Endothelial cell of umbilical vein (primary cell): ENCODE measurements at regions of chr14 and their contacts with region 1.

Region 1: GRCh38 chr14:70907176-70907995 is at the start of gene PCNX1:
- DNase-seq: peak; percentile 79
- H3K4me3 ChIP-seq: peak within 1 kb of the TSS; percentile 90 to 93 (median 90)
- H3K27ac ChIP-seq: peak within 1 kb of the TSS; percentile 23
- H3K4me1 ChIP-seq: peaks cover 28% of the 10 kb centered on the region
- H3K27me3 ChIP-seq: no peaks in the 10 kb centered on the region
- CTCF ChIP-seq: peak; percentile 77 to 80
- POLR2A ChIP-seq: peak; percentile 49
- total RNA-seq, gene PCNX1: 30.6 and 40.5 TPM in 2 replicates

Region 2: GRCh38 chr14:69766984-69767368 is 1140.4 kb before region 1 on chr14 and contains the start of gene SRSF5:
- CTCF ChIA-PET with region 1: no interaction called
- POLR2A ChIA-PET with region 1: no interaction called
- dilution Hi-C with region 1: no loop called
- intact Hi-C with region 1: loop called (anchors 1 kb)
- DNase-seq: peak; percentile 97
- H3K4me3 ChIP-seq: peak within 1 kb of the TSS; percentile 24 to 98 (median 76)
- H3K27ac ChIP-seq: peak within 1 kb of the TSS; percentile 88
- H3K4me1 ChIP-seq: peaks cover 27% of the 10 kb centered on the region
- H3K27me3 ChIP-seq: no peaks in the 10 kb centered on the region
- CTCF ChIP-seq: no peak
- POLR2A ChIP-seq: peak; percentile 99
- total RNA-seq, gene SRSF5: 253 and 276 TPM in 2 replicates

Region 3: DNA sequence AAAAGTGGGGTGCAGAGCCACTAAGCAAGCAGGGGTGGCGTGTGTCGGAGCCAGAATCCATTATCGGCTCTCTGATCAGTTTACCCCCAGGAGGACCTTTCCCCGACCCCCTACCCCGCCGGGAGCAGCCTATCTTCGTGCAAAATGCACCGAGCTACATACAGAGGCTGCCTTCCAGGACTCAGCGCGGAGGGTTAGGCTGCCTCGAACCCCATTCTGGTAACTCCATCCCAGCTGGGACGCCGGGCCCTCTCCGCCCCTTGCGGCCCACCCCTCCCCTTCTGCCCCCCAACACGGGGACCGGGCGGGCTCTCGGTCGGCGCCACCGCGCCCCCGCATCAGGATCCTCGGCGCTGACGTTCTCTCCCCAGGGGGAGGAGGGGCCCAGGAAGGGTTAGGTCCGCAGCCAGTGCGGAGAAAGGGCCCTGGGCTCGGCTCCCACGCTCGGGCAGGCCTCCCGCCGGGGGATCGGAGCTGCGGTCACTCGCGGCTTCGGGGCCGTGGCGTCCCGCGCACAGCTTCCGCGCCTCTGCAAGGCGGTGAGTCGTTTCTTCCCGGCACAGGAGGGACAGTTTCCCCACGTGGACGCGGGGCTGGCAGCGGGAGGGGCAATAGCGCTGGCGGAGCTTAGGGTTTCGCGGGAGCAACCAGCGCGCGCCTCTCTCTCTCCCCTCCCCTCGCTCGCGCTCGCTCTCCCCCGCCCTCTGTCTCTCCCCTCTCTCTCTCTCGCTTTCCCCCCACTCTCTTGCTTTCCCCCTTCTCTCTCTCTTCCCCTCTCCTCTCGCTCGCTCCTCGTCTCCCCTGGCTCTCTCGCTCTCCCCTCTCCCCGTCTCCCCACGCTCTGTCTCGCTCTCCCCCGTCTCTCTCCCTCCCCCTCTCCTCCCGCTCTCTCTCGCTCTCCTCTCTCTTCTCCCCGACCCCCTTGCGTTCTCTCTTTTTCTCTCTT is 85.5 kb before region 1 on chr14:
- CTCF ChIA-PET with region 1: interaction called, 21 read pairs
- POLR2A ChIA-PET with region 1: no interaction called
- dilution Hi-C with region 1: no loop called
- intact Hi-C with region 1: loop called (anchors 1 kb)
- DNase-seq: peak; percentile 15
- H3K4me3 ChIP-seq: peak overlapping the region; percentile 25 to 57 (median 47)
- H3K27ac ChIP-seq: no peak overlapping the region
- H3K4me1 ChIP-seq: no peaks in the 10 kb centered on the region
- H3K27me3 ChIP-seq: peaks cover 37 to 45% of the 10 kb centered on the region in 2 experiments
- CTCF ChIP-seq: no peak
- POLR2A ChIP-seq: no peak

Region 4: GRCh38 chr14:70919774-70920173 is 12.4 kb after region 1 on chr14:
- CTCF ChIA-PET with region 1: interaction called, 71 read pairs
- POLR2A ChIA-PET with region 1: no interaction called
- dilution Hi-C with region 1: no loop called
- intact Hi-C with region 1: loop called (anchors 1 kb)
- DNase-seq: peak; percentile 89
- H3K4me3 ChIP-seq: peak overlapping the region in 1 of 3 experiments; percentile 45
- H3K27ac ChIP-seq: peak overlapping the region; percentile 8
- H3K4me1 ChIP-seq: peaks cover 24% of the 10 kb centered on the region
- H3K27me3 ChIP-seq: no peaks in the 10 kb centered on the region
- CTCF ChIP-seq: no peak
- POLR2A ChIP-seq: no peak

Region 5: DNA sequence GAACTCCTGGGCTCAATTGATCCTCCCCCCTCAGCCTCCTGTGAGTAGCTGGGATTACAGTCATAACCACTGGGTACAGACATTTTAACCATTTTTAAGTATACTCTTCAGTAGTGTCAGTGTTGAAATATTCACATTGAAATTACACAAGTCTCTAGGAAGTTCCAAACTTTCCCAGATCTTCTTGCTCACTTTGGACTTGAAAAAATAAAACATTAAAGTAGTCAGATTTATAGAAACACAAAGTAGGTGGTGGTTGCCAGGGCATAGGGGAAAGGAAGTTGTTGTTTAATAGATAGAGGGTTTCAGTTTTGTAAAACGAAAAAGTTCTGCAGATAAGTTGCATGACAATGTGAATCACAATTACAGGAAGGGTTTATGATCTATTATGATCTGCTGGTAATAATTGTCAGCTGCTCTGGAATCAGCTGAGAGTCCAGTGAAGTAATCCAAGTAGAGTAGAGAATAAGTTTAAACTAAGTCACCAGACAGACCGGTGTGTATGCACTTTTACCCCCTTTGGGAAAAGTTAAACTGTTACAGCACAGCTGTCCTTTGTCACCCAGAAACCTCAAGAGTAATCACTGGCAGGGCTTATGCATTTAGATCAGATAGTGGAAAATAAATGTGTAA is 27.2 kb after region 1 on chr14:
- CTCF ChIA-PET with region 1: interaction called, 15 read pairs
- POLR2A ChIA-PET with region 1: no interaction called
- dilution Hi-C with region 1: no loop called
- intact Hi-C with region 1: no loop called
- DNase-seq: peak; percentile 74
- H3K4me3 ChIP-seq: no peak overlapping the region
- H3K27ac ChIP-seq: no peak overlapping the region
- H3K4me1 ChIP-seq: peaks cover 13% of the 10 kb centered on the region
- H3K27me3 ChIP-seq: no peaks in the 10 kb centered on the region
- CTCF ChIP-seq: no peak
- POLR2A ChIP-seq: no peak

Region 6: DNA sequence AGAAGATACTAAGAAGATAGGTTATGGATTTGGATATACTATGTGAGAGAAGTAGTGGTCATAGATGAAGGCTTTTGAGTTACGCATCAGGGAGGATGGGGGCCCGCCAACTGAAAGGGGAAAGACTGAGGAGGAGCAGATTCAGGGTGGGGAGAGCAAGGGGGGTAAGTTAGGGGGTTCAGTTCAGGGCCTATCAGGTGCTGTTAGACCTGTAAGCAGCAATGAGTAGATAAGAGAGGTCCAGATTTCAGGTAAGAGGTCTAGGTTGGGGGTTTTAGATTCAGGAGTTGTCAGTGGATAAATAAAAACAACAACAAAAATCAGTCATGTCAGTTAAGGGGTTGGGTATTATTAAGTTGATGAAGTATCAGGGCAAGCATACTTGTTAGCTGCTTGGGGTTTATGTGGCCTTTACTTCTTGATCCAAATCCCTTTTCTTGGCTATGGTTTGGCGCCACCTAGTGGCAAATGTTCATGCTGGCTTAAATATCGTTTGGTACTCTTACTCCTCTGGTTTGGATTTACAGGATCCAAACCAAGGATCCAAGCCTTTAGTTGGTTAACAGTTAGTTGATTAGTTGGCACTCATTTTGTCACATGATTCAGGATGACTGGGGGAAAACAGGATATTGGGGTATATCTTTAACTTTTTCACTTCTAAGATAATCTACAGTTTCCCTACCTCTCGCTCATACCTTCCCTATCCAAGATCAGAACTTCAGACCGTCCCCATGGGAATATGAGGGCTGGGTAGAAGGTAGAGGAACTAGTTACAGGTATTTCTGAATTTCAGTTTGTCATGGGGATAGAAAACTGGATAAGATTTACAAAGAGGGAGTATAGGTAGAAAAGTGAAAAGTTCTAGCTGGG is 65.0 kb after region 1 on chr14:
- CTCF ChIA-PET with region 1: interaction called, 56 read pairs
- POLR2A ChIA-PET with region 1: no interaction called
- dilution Hi-C with region 1: no loop called
- intact Hi-C with region 1: loop called (anchors 1 kb)
- DNase-seq: peak; percentile 83
- H3K4me3 ChIP-seq: no peak overlapping the region
- H3K27ac ChIP-seq: no peak overlapping the region
- H3K4me1 ChIP-seq: no peaks in the 10 kb centered on the region
- H3K27me3 ChIP-seq: no peaks in the 10 kb centered on the region
- CTCF ChIP-seq: peak; percentile 81 to 90
- POLR2A ChIP-seq: no peak